ENCODE measurements at regions of chr17 and their contacts with region 1.

Region 1: GRCh38 chr17:78082988-78083387 is 45.6 kb downstream of the TMC6 start:
- DNase-seq: no peak
- H3K4me3 ChIP-seq: no peak overlapping the region
- H3K27ac ChIP-seq: no peak overlapping the region
- H3K4me1 ChIP-seq: no peaks in the 10 kb centered on the region
- H3K27me3 ChIP-seq: no peaks in the 10 kb centered on the region
- CTCF ChIP-seq: no peak

Region 2: DNA sequence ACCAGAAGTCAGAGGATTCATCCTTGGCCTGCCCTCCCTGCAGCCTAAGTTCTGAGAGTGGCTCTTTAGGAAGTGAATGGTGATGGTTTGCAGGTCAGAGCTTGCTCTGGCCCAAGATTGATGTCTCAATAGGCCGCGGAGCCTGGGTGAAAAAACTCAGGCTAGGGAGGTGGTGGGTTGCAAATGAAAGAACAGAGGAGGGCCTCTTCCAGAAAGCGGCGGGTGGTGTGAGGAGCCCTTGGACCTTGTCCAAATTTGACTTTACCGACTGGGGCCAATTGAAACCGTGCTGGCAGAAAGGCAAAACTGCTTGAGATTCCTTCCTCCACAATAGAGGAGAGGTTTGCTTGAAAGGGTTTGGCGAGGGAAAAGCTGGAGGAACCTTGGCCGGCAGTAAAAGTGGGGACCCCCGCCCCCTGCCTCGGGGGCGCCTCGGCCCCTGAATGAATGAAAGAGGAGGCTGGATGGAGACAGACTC is 611.0 kb before region 1 on chr17:
- CTCF ChIA-PET with region 1: interaction called, 47 read pairs
- dilution Hi-C with region 1: no loop called
- in situ Hi-C with region 1: no loop called
- intact Hi-C with region 1: no loop called
- DNase-seq: peak; percentile 76
- H3K4me3 ChIP-seq: no peak overlapping the region
- H3K27ac ChIP-seq: peak overlapping the region; percentile 82
- H3K4me1 ChIP-seq: peaks cover 72% of the 10 kb centered on the region
- H3K27me3 ChIP-seq: no peaks in the 10 kb centered on the region
- CTCF ChIP-seq: no peak

Region 3: DNA sequence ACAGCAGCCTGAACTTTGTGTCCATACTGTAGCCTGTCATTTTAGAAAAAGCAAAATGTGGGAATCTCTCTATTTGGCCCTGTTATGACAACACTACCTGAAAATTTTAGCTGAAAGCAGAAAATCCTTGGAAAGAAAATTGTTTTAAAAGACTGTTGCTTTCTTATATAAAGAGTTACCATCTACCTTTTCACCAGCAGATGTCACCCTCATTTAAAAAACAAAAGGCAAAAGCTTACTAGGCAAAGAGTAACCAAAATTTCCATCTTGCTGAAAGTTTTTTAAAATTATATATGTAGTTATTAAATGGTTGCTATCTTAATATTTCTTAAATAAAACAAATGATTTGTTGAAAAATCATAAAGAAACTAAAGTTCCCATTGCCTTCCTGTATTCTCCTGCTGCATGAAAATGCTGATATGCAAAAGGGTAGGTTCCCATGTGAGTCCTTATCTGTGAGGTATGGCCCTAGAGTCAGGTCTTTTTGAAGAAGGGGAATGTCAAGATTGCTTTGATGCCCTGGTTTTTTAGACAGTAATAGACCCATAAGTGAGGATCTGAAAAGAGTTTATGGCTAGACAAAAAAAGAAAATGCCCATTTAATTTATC is 63.5 kb before region 1 on chr17:
- CTCF ChIA-PET with region 1: interaction called, 18 read pairs
- dilution Hi-C with region 1: no loop called
- in situ Hi-C with region 1: no loop called
- intact Hi-C with region 1: loop called (anchors 1 kb)
- DNase-seq: no peak
- H3K4me3 ChIP-seq: no peak overlapping the region
- H3K27ac ChIP-seq: no peak overlapping the region
- H3K4me1 ChIP-seq: no peaks in the 10 kb centered on the region
- H3K27me3 ChIP-seq: no peaks in the 10 kb centered on the region
- CTCF ChIP-seq: peak; percentile 50 to 66